ENCODE measurements at regions of chrX and their contacts with region 1.

Region 1: DNA sequence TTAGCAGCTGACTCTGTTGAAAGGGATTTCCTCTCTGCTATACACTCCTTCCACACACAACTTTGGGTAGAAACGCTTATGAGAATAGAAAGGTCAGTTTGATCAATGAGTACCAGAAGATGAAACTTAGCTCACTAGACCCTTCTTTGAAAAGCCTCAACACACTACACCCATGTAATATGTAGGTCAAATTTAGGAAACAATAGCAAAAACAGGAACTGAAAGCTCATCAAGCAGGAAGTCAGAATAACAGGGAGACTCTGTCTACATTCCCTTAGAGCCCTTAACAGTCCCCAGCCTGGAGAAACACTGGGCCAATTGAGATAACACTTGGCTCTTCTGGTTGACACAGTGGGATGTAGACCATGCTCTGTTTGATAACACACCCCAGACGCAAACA is 30.7 kb downstream of the SRPX2 start:
- DNase-seq: no peak
- H3K4me3 ChIP-seq: no peak overlapping the region
- H3K4me3 Mint-ChIP-seq: no peak overlapping the region
- H3K27ac Mint-ChIP-seq: no peak overlapping the region
- H3K4me1 ChIP-seq: no peaks in the 10 kb centered on the region
- H3K4me1 Mint-ChIP-seq: peaks cover 6% of the 10 kb centered on the region
- H3K27me3 ChIP-seq: no peaks in the 10 kb centered on the region
- H3K27me3 Mint-ChIP-seq: no peaks in the 10 kb centered on the region
- CTCF ChIP-seq: no peak

Region 2: GRCh38 chrX:100615005-100615404 is 59.7 kb before region 1 on chrX:
- CTCF ChIA-PET with region 1: interaction called, 13 read pairs
- POLR2A ChIA-PET with region 1: no interaction called
- intact Hi-C with region 1: no loop called
- DNase-seq: peak; percentile 38 to 55
- H3K4me3 ChIP-seq: no peak overlapping the region
- H3K4me3 Mint-ChIP-seq: no peak overlapping the region
- H3K27ac Mint-ChIP-seq: peak overlapping the region; percentile 64
- H3K4me1 ChIP-seq: 0 out of 2 replicates have a peak, but pooled peaks cover 7% of the 10 kb centered on the region
- H3K4me1 Mint-ChIP-seq: no peaks in the 10 kb centered on the region
- H3K27me3 ChIP-seq: no peaks in the 10 kb centered on the region
- H3K27me3 Mint-ChIP-seq: no peaks in the 10 kb centered on the region
- CTCF ChIP-seq: peak; percentile 22 to 59

Region 3: DNA sequence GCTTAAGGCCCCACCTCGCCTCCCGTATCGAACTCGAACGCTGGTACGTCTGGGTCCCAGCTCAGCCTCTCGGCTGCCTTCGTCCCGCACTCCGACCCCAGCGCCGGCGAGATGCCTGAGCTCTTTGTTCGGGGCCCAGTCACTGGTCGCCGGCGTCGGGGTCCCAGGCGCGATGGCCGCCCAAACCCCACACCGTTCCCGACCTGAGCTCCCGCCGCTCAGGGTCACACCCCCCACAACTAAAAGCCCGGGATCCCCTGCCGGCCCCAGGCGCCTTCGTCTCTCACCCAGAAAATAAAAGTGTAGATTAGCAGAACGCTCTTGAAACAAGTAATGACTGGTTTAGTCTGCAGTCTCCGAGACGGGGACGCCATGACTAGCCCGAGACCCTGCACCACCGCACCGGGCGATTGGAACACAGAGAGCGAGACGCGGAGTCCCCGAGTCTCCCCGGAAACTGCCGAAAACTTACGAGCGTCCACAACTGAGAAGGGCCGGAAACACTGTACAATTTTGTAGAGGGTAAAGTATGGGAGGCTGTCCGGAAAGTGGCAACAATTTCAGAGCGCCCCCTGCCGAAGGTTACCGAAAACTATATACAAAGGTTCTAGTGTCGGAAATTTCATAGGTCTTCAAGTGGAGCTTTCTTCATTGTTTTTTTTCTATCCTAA is 38.2 kb before region 1 on chrX and contains the start of gene TSPAN6:
- CTCF ChIA-PET with region 1: interaction called, 10 read pairs
- POLR2A ChIA-PET with region 1: no interaction called
- intact Hi-C with region 1: no loop called
- DNase-seq: peak; percentile 89
- H3K4me3 ChIP-seq: peak within 1 kb of the TSS; percentile 81
- H3K4me3 Mint-ChIP-seq: peak within 1 kb of the TSS; percentile 78
- H3K27ac Mint-ChIP-seq: peak within 1 kb of the TSS; percentile 93
- H3K4me1 ChIP-seq: peaks cover 5% of the 10 kb centered on the region
- H3K4me1 Mint-ChIP-seq: peaks cover 19% of the 10 kb centered on the region
- H3K27me3 ChIP-seq: no peaks in the 10 kb centered on the region
- H3K27me3 Mint-ChIP-seq: no peaks in the 10 kb centered on the region
- CTCF ChIP-seq: peak in 1 of 2 experiments; percentile 53
- total RNA-seq, gene TSPAN6: 135 and 137 TPM in 2 replicates

Region 4: GRCh38 chrX:100649550-100650356 is 25.0 kb before region 1 on chrX:
- CTCF ChIA-PET with region 1: interaction called, 6 read pairs
- POLR2A ChIA-PET with region 1: no interaction called
- intact Hi-C with region 1: loop called (anchors 1 kb)
- DNase-seq: peak; percentile 88 to 92
- H3K4me3 ChIP-seq: no peak overlapping the region
- H3K4me3 Mint-ChIP-seq: peak overlapping the region; percentile 71
- H3K27ac Mint-ChIP-seq: peak overlapping the region; percentile 97
- H3K4me1 ChIP-seq: peaks cover 47% of the 10 kb centered on the region
- H3K4me1 Mint-ChIP-seq: peaks cover 26% of the 10 kb centered on the region
- H3K27me3 ChIP-seq: no peaks in the 10 kb centered on the region
- H3K27me3 Mint-ChIP-seq: no peaks in the 10 kb centered on the region
- CTCF ChIP-seq: no peak